CD8-positive, alpha-beta memory T cell (primary cell): ENCODE measurements at regions of chr7 and their contacts with region 1.

Region 1: DNA sequence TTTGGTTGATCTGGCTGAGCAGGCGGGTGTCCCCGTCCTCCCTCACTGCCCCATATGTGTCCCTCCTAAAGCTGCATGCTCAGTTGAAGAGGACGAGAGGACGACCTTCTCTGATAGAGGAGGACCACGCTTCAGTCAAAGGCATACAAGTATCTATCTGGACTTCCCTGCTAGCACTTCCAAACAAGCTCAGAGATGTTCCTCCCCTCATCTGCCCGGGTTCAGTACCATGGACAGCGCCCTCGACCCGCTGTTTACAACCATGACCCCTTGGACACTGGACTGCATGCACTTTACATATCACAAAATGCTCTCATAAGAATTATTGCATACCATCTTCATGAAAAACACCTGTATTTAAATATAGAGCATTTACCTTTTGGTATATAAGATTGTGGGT is 26.9 kb upstream of the TRIM56 start:
- DNase-seq: peak; percentile 24 to 61 (median 40)
- H3K4me3 ChIP-seq: no peak overlapping the region
- H3K4me3 Mint-ChIP-seq: no peak overlapping the region
- H3K27ac ChIP-seq: no peak overlapping the region
- H3K27ac Mint-ChIP-seq: no peak overlapping the region
- H3K4me1 ChIP-seq: no peaks in the 10 kb centered on the region
- H3K4me1 Mint-ChIP-seq: peaks cover 0 to 4% (median 0%) of the 10 kb centered on the region in 3 donors
- H3K27me3 ChIP-seq: peaks cover 7% of the 10 kb centered on the region
- H3K27me3 Mint-ChIP-seq: peaks cover 22 to 51% of the 10 kb centered on the region in 2 donors

Region 2: GRCh38 chr7:100190048-100190711 is 868.2 kb before region 1 on chr7:
- CTCF ChIA-PET with region 1: no interaction called
- POLR2A ChIA-PET with region 1: no interaction called
- DNase-seq: peak in 2 of 5 donors; percentile 49 to 59
- H3K4me3 ChIP-seq: no peak overlapping the region
- H3K4me3 Mint-ChIP-seq: no peak overlapping the region
- H3K27ac ChIP-seq: no peak overlapping the region
- H3K27ac Mint-ChIP-seq: peak overlapping the region in 6 of 8 donors; percentile 5 to 60 (median 50)
- H3K4me1 ChIP-seq: peaks cover 15% of the 10 kb centered on the region
- H3K4me1 Mint-ChIP-seq: peaks cover 2 to 10% (median 7%) of the 10 kb centered on the region in 3 donors
- H3K27me3 ChIP-seq: no peaks in the 10 kb centered on the region
- H3K27me3 Mint-ChIP-seq: no peaks in the 10 kb centered on the region

Region 3: DNA sequence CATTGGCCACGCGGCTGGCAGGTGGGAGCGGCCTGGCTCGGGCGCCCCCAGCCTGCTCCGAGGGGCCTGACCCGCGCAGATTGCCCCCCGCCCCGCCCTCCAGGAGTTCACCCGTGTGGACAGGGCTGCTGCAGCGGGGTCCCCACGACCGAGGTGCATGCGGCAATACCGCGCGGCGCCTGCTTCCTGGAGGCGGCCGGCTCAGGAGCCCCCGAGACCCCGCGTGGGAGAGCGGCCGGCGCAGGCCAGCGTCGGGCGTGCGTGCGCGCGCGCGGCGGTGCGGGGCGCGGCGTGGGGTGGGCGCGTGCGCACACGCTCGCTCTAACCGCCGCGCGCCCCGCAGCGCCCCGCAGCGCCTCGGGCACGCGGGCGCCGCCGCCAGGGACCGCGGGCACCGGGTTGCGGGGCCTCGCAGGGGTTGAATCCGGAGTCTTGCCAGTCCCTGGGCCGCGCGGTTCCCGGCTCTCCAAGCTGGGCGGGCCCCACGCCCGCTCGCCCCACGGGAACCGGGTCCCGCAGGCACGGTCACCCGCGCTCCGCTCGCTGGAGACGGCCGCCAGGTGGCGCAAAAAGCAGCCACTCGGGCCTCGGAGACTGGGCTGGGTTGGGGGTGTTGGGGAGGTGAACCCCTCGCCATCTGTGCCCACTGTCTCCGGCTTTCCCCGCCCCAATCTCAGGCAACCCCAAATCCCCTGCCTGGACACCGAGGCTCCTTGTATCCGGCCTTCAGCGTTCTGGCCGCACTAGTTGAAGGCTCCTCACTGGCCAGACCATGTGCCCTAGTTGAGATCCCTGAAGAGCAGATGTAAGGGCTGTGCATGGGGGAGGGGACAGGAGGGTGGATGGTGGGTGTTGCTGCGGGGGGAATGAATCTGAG is 161.4 kb before region 1 on chr7:
- CTCF ChIA-PET with region 1: interaction called, 14 read pairs
- POLR2A ChIA-PET with region 1: no interaction called
- DNase-seq: peak in 4 of 5 donors; percentile 33 to 62 (median 42)
- H3K4me3 ChIP-seq: peak overlapping the region; percentile 59
- H3K4me3 Mint-ChIP-seq: peak overlapping the region; percentile 38 to 88 (median 67)
- H3K27ac ChIP-seq: no peak overlapping the region
- H3K27ac Mint-ChIP-seq: peak overlapping the region in 3 of 8 donors; percentile 9 to 56 (median 41)
- H3K4me1 ChIP-seq: peaks cover 15% of the 10 kb centered on the region
- H3K4me1 Mint-ChIP-seq: peaks cover 8 to 15% (median 8%) of the 10 kb centered on the region in 3 donors
- H3K27me3 ChIP-seq: peaks cover 23% of the 10 kb centered on the region
- H3K27me3 Mint-ChIP-seq: peaks cover 36 to 52% of the 10 kb centered on the region in 2 donors

Region 4: GRCh38 chr7:101165075-101165957 is 107.0 kb after region 1 on chr7 and contains the start of gene VGF:
- CTCF ChIA-PET with region 1: no interaction called
- POLR2A ChIA-PET with region 1: no interaction called
- DNase-seq: peak; percentile 87 to 94 (median 90)
- H3K4me3 ChIP-seq: peak within 1 kb of the TSS; percentile 50
- H3K4me3 Mint-ChIP-seq: peak within 1 kb of the TSS; percentile 52 to 88 (median 74)
- H3K27ac ChIP-seq: no peak within 1 kb of the TSS
- H3K27ac Mint-ChIP-seq: peak within 1 kb of the TSS in 7 of 8 donors; percentile 2 to 88 (median 65)
- H3K4me1 ChIP-seq: peaks cover 41% of the 10 kb centered on the region
- H3K4me1 Mint-ChIP-seq: peaks cover 35 to 60% (median 41%) of the 10 kb centered on the region in 3 donors
- H3K27me3 ChIP-seq: peaks cover 68% of the 10 kb centered on the region
- H3K27me3 Mint-ChIP-seq: peaks cover 63% of the 10 kb centered on the region in 2 donors
- total RNA-seq, gene VGF: 0.13 to 0.16 TPM